Panc1 (cell line): ENCODE measurements at regions of chr4 and their contacts with region 1.

Region 1: GRCh38 chr4:147590249-147590920 is 26.8 kb upstream of the TMEM184C start:
- DNase-seq: peak; percentile 38
- ATAC-seq: no peak
- H3K4me3 ChIP-seq: no peak overlapping the region
- H3K27ac ChIP-seq: no peak overlapping the region
- H3K4me1 ChIP-seq: no peaks in the 10 kb centered on the region
- H3K27me3 ChIP-seq: no peaks in the 10 kb centered on the region
- CTCF ChIP-seq: peak; percentile 70; the same call in 1 of the 2 replicates

Region 2: GRCh38 chr4:147019061-147019460 is 571.3 kb before region 1 on chr4:
- CTCF ChIA-PET with region 1: no interaction called
- POLR2A ChIA-PET with region 1: no interaction called
- in situ Hi-C with region 1: no loop called
- intact Hi-C with region 1: loop called (anchors 5 kb)
- DNase-seq: peak; percentile 17
- ATAC-seq: peak; percentile 80
- H3K4me3 ChIP-seq: no peak overlapping the region
- H3K27ac ChIP-seq: no peak overlapping the region
- H3K4me1 ChIP-seq: no peaks in the 10 kb centered on the region
- H3K27me3 ChIP-seq: no peaks in the 10 kb centered on the region
- CTCF ChIP-seq: peak; percentile 70

Region 3: DNA sequence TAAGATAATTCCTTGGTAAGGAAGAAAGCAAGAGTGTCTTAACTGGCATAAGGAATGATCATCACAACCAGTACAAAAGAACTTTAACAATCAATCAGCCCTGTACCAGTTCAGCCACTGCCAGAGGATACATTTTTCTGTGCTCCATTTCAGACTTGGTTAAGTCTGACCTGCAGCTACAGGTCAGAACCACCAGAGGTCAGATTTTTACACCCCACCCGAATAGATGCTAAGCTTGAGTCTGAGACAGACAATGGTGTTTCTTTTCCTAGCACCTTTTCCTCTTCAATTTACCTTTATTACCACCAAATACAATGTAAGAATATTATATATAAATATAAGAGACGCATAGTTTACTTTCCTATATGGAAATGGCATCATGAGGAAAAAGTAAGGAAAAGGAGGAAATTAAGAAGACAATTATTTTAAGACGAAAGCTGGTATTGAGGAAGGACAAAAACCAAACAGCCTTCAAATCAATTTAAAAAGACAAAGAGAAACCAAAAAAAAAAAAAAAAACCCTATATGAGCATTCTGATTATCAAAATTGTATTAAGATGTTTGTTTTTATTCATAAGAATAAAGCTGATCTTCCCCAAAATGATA is 429.4 kb before region 1 on chr4:
- CTCF ChIA-PET with region 1: interaction called, 6 read pairs
- POLR2A ChIA-PET with region 1: interaction called, 3 read pairs
- in situ Hi-C with region 1: no loop called
- intact Hi-C with region 1: loop called (anchors 2 kb)
- DNase-seq: peak; percentile 20
- ATAC-seq: peak; percentile 69; the same call in 1 of the 2 replicates
- H3K4me3 ChIP-seq: no peak overlapping the region
- H3K27ac ChIP-seq: no peak overlapping the region
- H3K4me1 ChIP-seq: no peaks in the 10 kb centered on the region
- H3K27me3 ChIP-seq: peaks cover 5% of the 10 kb centered on the region; the same call in 1 of the 2 replicates
- CTCF ChIP-seq: peak; percentile 76

Region 4: GRCh38 chr4:147513952-147514351 is 76.4 kb before region 1 on chr4:
- CTCF ChIA-PET with region 1: interaction called, 3 read pairs
- POLR2A ChIA-PET with region 1: no interaction called
- in situ Hi-C with region 1: no loop called
- intact Hi-C with region 1: loop called (anchors 1 kb)
- DNase-seq: no peak
- ATAC-seq: no peak
- H3K4me3 ChIP-seq: no peak overlapping the region
- H3K27ac ChIP-seq: no peak overlapping the region
- H3K4me1 ChIP-seq: no peaks in the 10 kb centered on the region
- H3K27me3 ChIP-seq: no peaks in the 10 kb centered on the region
- CTCF ChIP-seq: no peak

Region 5: GRCh38 chr4:147518846-147519767 is 71.3 kb before region 1 on chr4:
- CTCF ChIA-PET with region 1: interaction called, 3 read pairs
- POLR2A ChIA-PET with region 1: no interaction called
- in situ Hi-C with region 1: no loop called
- intact Hi-C with region 1: loop called (anchors 1 kb)
- DNase-seq: peak; percentile 46
- ATAC-seq: peak; percentile 78; the same call in 1 of the 2 replicates
- H3K4me3 ChIP-seq: no peak overlapping the region
- H3K27ac ChIP-seq: no peak overlapping the region
- H3K4me1 ChIP-seq: no peaks in the 10 kb centered on the region
- H3K27me3 ChIP-seq: no peaks in the 10 kb centered on the region
- CTCF ChIP-seq: peak; percentile 77